PC-9 (cell line): ENCODE measurements at regions of chr12 and their contacts with region 1.

Region 1: DNA sequence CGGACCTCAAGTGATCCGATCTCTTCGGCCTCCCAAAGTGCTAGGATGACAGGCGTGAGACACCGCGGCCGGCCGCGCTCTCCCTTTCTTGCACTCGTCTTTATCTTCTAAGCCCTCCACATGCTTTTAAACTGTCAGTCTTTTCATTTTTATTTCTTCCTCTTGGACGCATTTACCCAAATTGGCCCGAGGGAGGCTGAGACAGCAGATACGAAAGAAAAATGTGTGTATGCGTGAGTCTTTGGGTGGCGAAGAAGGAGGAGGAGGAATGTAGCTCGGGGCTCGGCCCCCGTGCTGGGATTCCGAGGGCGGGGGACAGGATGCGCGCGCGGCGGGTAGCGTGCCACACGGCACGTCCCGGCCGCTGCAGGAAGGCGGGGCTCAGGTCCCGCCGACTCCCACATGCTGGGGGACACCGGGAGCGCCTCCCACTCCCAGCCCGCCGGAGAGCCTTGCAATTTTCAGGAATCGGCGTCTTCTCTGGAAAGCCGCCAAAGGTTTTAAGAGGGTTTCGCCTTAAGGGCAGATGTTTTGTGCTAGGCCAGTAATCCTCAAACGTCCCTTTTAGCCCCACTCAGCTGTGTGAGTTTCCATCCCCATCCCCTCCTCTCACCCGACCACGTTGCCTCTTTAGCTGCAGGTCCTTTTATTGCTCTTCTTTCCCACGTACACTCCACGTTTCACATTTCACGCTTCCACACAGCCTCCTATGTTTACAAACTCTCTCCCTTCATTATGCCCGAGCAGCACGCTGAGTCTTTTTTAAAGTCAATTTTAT is 34.7 kb upstream of the SLC2A3 start:
- DNase-seq: peak; percentile 90 to 98
- H3K4me3 ChIP-seq: peak overlapping the region; percentile 58
- H3K27ac ChIP-seq: peak overlapping the region; percentile 65
- H3K4me1 ChIP-seq: peaks cover 18% of the 10 kb centered on the region
- H3K27me3 ChIP-seq: no peaks in the 10 kb centered on the region
- CTCF ChIP-seq: no peak

Region 2: GRCh38 chr12:8011331-8011730 is 40.7 kb after region 1 on chr12:
- CTCF ChIA-PET with region 1: no interaction called
- POLR2A ChIA-PET with region 1: no interaction called
- intact Hi-C with region 1: no loop called
- DNase-seq: peak in 1 of 2 experiments; percentile 85
- H3K4me3 ChIP-seq: no peak overlapping the region
- H3K27ac ChIP-seq: peak overlapping the region; percentile 26
- H3K4me1 ChIP-seq: peaks cover 6% of the 10 kb centered on the region
- H3K27me3 ChIP-seq: no peaks in the 10 kb centered on the region
- CTCF ChIP-seq: no peak

Region 3: DNA sequence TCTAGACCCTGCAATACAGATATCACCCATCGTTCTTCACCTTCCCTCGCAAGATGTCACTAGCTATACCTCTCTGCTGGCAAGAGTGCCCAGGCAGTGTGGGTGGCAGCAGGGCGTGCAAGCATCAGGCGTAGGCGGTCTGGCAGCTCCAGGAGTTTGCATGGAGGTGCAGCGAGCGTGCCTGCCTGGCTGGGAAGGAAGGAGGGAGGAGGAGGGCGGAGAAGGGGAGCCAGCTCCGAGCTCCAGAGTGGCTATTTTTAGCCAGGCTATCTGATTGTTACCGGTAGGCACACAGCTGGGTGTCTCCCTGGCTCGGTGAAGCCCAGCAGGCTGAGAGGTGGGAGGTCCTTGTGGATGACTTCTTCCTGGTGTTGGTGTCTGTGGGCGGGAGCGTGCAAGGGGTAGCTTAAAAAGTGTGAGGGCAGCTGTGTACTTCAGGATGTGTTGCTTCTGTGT is 68.0 kb after region 1 on chr12:
- CTCF ChIA-PET with region 1: no interaction called
- POLR2A ChIA-PET with region 1: interaction called, 11 read pairs
- intact Hi-C with region 1: no loop called
- DNase-seq: peak in 1 of 2 experiments; percentile 70
- H3K4me3 ChIP-seq: no peak overlapping the region
- H3K27ac ChIP-seq: no peak overlapping the region
- H3K4me1 ChIP-seq: peaks cover 32% of the 10 kb centered on the region
- H3K27me3 ChIP-seq: no peaks in the 10 kb centered on the region
- CTCF ChIP-seq: no peak